PC-3 (cell line): ENCODE measurements at regions of chr4 and their contacts with region 1.

Region 1: GRCh38 chr4:159446266-159446976 is 343.5 kb downstream of the RAPGEF2 start:
- DNase-seq: peak; percentile 80
- ATAC-seq: peak; percentile 100
- H3K4me3 ChIP-seq: no peak overlapping the region
- H3K27ac ChIP-seq: no peak overlapping the region
- H3K4me1 ChIP-seq: peaks cover 3% of the 10 kb centered on the region; the same call in 1 of the 2 replicates
- H3K27me3 ChIP-seq: no peaks in the 10 kb centered on the region
- CTCF ChIP-seq: peak; percentile 88

Region 2: DNA sequence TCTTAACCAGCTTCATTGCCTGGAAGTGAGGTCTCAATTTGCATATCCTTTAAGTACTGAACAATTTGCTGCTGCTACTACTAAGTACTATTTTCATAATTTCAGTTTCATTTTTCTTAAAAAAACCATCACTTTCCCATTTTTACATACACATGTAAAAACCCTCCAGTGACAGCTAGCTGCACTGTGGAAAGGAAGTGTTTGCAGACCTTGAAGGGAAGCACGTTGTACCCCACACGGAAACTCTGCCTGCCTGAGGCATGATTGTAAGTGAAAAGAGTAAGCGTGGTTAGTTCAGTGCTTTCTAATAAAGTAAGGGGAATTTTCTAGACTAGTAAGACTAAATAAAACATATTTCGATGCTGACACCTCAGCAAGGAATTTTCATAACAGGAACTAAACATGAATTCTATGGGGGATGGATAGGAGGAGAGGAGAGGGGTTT is 240.0 kb before region 1 on chr4:
- CTCF ChIA-PET with region 1: no interaction called
- POLR2A ChIA-PET with region 1: no interaction called
- intact Hi-C with region 1: loop called (anchors 2 kb)
- DNase-seq: peak; percentile 35
- ATAC-seq: peak; percentile 57
- H3K4me3 ChIP-seq: no peak overlapping the region
- H3K27ac ChIP-seq: no peak overlapping the region; the same call in 1 of the 2 replicates
- H3K4me1 ChIP-seq: peaks cover 12% of the 10 kb centered on the region
- H3K27me3 ChIP-seq: no peaks in the 10 kb centered on the region
- CTCF ChIP-seq: no peak

Region 3: GRCh38 chr4:159312236-159312635 is 134.2 kb before region 1 on chr4:
- CTCF ChIA-PET with region 1: no interaction called
- POLR2A ChIA-PET with region 1: no interaction called
- intact Hi-C with region 1: loop called (anchors 10 kb)
- DNase-seq: no peak
- ATAC-seq: no peak
- H3K4me3 ChIP-seq: no peak overlapping the region
- H3K27ac ChIP-seq: no peak overlapping the region
- H3K4me1 ChIP-seq: peaks cover 15% of the 10 kb centered on the region
- H3K27me3 ChIP-seq: no peaks in the 10 kb centered on the region
- CTCF ChIP-seq: no peak

Region 4: GRCh38 chr4:159384632-159385031 is 61.8 kb before region 1 on chr4:
- CTCF ChIA-PET with region 1: interaction called, 3 read pairs
- POLR2A ChIA-PET with region 1: no interaction called
- intact Hi-C with region 1: loop called (anchors 5 kb)
- DNase-seq: no peak
- ATAC-seq: no peak
- H3K4me3 ChIP-seq: no peak overlapping the region
- H3K27ac ChIP-seq: no peak overlapping the region
- H3K4me1 ChIP-seq: no peaks in the 10 kb centered on the region
- H3K27me3 ChIP-seq: no peaks in the 10 kb centered on the region
- CTCF ChIP-seq: no peak; the same call in 1 of the 2 replicates